ENCODE measurements at regions of chr1 and their contacts with region 1.

Region 1: DNA sequence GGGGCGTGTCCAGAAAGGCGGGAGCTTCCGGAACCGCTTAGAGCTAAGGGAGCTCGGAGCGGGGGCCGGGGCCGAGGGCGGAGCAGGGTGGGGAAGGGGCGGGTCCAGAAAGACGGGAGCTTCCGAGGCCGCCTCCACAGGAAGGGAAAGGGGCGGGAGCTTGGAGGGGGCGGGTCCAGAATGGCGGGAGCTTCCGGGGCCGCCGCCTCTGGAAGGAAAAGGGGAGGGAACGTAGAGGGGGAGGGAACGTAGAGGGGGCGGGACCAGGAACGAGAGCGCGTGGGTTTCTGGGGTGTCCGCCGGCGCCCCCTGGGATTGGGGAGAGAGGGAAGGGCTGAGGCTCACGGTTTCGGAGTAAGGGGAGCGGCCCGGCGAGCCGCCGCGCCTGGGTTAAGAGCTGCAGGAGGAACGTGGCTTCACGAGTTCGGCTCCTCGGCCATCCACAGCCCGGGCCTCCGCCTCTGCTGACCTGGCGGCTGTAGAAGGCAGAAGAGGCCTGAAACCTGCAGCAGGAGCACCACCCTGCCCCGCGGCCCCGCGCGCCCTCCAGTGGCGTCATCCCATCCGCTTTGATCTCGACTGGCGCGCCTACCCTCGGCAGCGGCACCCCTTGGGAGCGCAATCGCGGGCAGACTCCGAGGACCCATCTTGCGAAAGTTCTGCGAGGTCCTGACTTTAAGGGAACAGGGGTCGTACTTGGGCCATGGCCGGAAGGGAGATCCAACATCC is 22.9 kb upstream of the HPDL start:
- DNase-seq: peak; percentile 97
- H3K4me3 ChIP-seq: peak overlapping the region; percentile 65 to 94 (median 84)
- H3K27ac ChIP-seq: peak overlapping the region; percentile 92
- H3K4me1 ChIP-seq: peaks cover 7% of the 10 kb centered on the region
- H3K27me3 ChIP-seq: no peaks in the 10 kb centered on the region
- CTCF ChIP-seq: peak; percentile 17 to 65

Region 2: DNA sequence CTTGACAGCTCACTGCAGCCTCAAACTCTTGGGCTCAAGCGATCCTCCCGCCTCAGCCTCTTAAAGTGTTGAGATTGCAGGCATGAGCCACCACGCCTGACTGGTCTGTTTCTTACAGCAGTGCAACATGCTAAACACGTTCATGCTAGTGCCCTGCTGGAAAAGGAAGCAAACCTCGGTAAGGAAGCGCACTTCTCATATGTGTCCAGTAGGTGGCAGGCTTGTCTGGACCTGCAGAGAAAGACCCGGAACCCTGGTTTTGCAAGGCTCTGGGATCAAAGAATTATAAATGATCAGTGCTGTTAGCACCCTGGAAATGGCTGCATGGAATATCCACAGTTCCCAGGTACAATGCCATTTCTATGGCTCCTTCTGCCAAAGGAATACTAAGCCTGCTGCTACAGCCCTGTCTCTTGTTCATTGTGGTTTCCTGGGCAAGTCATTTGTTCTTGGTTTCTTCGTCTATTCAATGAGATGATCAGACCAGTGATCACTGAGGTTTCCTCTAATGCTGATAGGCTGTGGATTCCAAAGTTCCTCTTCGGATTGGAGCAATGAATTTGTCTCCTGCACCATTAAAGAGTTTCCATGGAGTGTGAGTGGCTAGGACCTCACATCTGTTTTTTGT is 588.7 kb before region 1 on chr1:
- CTCF ChIA-PET with region 1: no interaction called
- dilution Hi-C with region 1: no loop called
- in situ Hi-C with region 1: no loop called
- intact Hi-C with region 1: loop called (anchors 5 kb)
- DNase-seq: peak; percentile 66
- H3K4me3 ChIP-seq: no peak overlapping the region
- H3K27ac ChIP-seq: no peak overlapping the region
- H3K4me1 ChIP-seq: no peaks in the 10 kb centered on the region
- H3K27me3 ChIP-seq: no peaks in the 10 kb centered on the region
- CTCF ChIP-seq: peak; percentile 94 to 99

Region 3: DNA sequence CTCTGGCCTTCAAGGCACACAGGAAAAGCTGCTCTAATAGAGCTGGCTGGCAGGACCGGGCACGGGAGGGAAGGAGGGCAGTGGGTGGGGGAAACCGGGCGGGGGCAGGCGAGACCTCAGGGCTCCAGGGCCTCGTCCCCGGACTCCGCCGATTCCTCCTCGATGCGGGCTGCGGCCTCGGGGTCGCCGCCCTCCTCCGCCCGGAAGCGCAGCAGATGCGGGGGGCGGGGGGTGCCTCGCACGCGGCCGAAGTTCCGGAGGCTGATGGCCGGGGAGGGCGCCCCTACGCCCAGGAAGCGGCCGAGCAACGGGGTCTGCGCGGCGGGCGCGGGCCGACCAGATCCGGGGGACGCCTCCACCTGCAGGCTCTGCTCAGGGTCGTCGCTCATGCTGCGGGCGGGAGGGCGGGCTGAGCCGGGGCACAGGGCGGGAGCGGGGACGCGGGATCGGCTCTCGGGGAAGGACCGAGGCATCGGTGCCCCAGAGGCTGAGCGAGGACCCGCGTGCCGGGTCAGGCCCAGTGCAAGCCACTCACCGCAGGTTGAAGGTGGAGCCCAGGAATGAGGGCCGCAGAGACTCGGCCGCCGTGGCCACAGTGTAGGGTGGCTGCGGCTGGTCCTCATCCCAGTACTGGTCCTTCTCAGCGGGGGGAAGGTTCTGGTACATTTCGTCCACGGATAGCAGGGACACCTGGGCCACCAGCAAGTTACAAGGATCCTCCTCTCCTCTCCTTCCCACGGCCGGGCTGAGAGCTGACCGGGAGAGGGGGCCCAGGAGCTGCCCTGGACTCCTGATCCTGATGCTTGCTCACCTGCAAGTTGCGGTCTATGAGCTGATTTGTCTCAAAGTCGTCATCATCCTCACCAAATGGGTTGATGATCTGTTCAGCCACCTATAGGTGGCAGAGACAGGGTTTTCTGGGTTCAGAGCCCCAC is 519.4 kb before region 1 on chr1:
- CTCF ChIA-PET with region 1: no interaction called
- dilution Hi-C with region 1: no loop called
- in situ Hi-C with region 1: no loop called
- intact Hi-C with region 1: loop called (anchors 2 kb)
- DNase-seq: peak; percentile 49
- H3K4me3 ChIP-seq: peak overlapping the region in 2 of 3 experiments; percentile 23 to 37
- H3K27ac ChIP-seq: no peak overlapping the region
- H3K4me1 ChIP-seq: peaks cover 26% of the 10 kb centered on the region
- H3K27me3 ChIP-seq: no peaks in the 10 kb centered on the region
- CTCF ChIP-seq: peak; percentile 32 to 44

Region 4: GRCh38 chr1:44835738-44836675 is 467.7 kb before region 1 on chr1:
- CTCF ChIA-PET with region 1: no interaction called
- dilution Hi-C with region 1: no loop called
- in situ Hi-C with region 1: loop called in 1 of 2 experiments (anchors 25 kb)
- intact Hi-C with region 1: loop called (anchors 2 kb)
- DNase-seq: peak; percentile 66
- H3K4me3 ChIP-seq: no peak overlapping the region
- H3K27ac ChIP-seq: no peak overlapping the region
- H3K4me1 ChIP-seq: no peaks in the 10 kb centered on the region
- H3K27me3 ChIP-seq: no peaks in the 10 kb centered on the region
- CTCF ChIP-seq: peak; percentile 89 to 91

Region 5: GRCh38 chr1:45011837-45012638 is 291.7 kb before region 1 on chr1 and contains the start of gene UROD:
- CTCF ChIA-PET with region 1: interaction called, 24 read pairs
- dilution Hi-C with region 1: no loop called
- in situ Hi-C with region 1: loop called (anchors 5 kb)
- intact Hi-C with region 1: loop called (anchors 1 kb)
- DNase-seq: peak; percentile 93
- H3K4me3 ChIP-seq: peak within 1 kb of the TSS; percentile 59 to 86 (median 82)
- H3K27ac ChIP-seq: peak within 1 kb of the TSS; percentile 69
- H3K4me1 ChIP-seq: peaks cover 24% of the 10 kb centered on the region
- H3K27me3 ChIP-seq: no peaks in the 10 kb centered on the region
- CTCF ChIP-seq: no peak
- total RNA-seq, gene UROD: 100 to 108 TPM

Region 6: DNA sequence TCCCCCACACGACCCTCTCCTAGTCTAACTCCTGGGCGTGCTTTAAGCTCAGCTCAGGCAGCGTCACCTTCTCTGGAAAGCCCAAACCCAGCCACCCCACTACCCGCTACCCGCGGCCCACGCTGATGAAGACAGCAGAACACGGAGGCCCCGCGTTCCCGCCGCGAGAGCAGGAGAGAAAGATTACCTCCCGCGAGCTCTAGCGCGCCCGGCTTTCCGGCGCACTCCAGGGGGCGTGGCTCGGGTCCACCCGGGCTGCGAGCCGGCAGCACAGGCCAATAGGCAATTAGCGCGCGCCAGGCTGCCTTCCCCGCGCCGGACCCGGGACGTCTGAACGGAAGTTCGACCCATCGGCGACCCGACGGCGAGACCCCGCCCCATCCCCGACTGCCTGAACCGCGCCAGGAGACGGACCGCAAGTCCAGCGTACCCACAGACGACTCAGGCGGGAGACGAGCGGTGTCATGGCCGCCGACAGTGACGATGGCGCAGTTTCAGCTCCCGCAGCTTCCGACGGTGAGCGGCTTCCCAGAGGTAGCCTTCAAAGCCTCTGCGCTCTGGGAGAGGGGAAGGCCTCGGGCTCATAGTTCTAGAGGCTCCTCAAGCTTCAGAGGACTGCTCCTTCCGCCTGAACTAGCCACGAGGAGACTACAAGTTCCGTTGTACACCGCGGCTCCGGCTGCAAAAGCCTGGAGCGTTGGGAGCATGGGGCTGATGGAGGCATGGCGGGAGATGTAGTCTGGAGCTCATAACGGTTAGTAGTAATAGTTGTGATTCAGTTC is 36.2 kb after region 1 on chr1 and contains the starts of genes MUTYH and TOE1:
- CTCF ChIA-PET with region 1: interaction called, 4 read pairs
- dilution Hi-C with region 1: no loop called
- in situ Hi-C with region 1: no loop called
- intact Hi-C with region 1: loop called (anchors 1 kb)
- DNase-seq: peak; percentile 91
- H3K4me3 ChIP-seq: peak within 1 kb of the TSS; percentile 58 to 75 (median 68)
- H3K27ac ChIP-seq: peak within 1 kb of the TSS; percentile 84
- H3K4me1 ChIP-seq: peaks cover 12% of the 10 kb centered on the region
- H3K27me3 ChIP-seq: no peaks in the 10 kb centered on the region
- CTCF ChIP-seq: no peak
- total RNA-seq, gene MUTYH: 9.8 to 24.8 TPM
- total RNA-seq, gene TOE1: 9.0 to 12.8 TPM

Region 7: GRCh38 chr1:45569962-45570581 is 266.3 kb after region 1 on chr1:
- CTCF ChIA-PET with region 1: no interaction called
- dilution Hi-C with region 1: no loop called
- in situ Hi-C with region 1: no loop called
- intact Hi-C with region 1: loop called (anchors 1 kb)
- DNase-seq: peak; percentile 62
- H3K4me3 ChIP-seq: no peak overlapping the region
- H3K27ac ChIP-seq: no peak overlapping the region
- H3K4me1 ChIP-seq: no peaks in the 10 kb centered on the region
- H3K27me3 ChIP-seq: no peaks in the 10 kb centered on the region
- CTCF ChIP-seq: peak; percentile 99 to 100